HepG2 (cell line): ENCODE measurements at regions of chr1 and their contacts with region 1.

Region 1: DNA sequence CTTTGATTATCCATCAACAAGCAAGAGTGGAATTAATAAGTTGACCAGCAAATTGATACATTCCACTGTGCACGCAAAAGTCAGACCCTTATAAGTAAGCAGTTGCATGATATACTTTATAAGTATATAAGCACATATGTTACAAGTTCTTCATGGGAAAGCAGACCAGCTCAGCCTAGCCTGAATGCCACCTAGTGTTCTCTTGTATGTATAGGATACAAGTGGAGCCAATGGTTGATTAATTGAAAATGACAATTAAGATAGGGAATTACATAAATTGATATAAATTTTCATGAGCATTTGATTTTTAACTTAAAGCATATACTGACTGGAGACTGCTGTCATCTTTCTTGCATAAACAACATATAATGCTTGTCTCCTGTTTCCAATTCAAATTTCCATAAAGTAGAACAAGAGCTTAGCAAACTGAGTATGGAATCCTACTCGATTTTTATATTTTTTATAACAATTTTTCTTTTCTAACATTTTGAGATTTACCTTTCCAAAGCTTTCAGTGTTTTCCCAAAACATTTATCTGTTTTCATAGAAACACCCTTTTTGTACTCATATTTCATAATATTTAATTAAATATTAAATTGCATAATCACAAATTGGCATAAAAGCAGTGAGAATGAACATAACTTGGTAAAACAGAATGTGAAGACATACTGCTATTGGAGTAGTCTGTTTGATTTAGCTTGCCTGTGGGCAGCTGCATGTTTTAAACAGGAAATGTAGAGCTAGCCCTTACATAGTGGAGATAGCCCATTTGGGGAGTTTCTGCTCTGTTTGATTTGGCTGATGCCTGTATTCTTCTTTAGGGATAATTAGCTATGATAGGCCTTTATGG is 62.8 kb downstream of the MAGI3 start:
- DNase-seq: peak; percentile 32
- ATAC-seq: peak; percentile 64; the same call in 2 of the 3 replicates
- H3K4me3 ChIP-seq: no peak overlapping the region
- H3K27ac ChIP-seq: no peak overlapping the region
- H3K4me1 ChIP-seq: peaks cover 28% of the 10 kb centered on the region
- H3K27me3 ChIP-seq: no peaks in the 10 kb centered on the region
- CTCF ChIP-seq: peak; percentile 57
- EP300 ChIP-seq: no peak
- POLR2A ChIP-seq: no peak
- RAD21 ChIP-seq: 0 out of 2 replicates have a peak, but pooled peaks have one; percentile 34

Region 2: GRCh38 chr1:113140588-113141446 is 312.3 kb before region 1 on chr1:
- CTCF ChIA-PET with region 1: interaction called, 11 read pairs
- POLR2A ChIA-PET with region 1: no interaction called
- in situ Hi-C with region 1: no loop called
- intact Hi-C with region 1: loop called (anchors 1 kb)
- DNase-seq: peak; percentile 68
- ATAC-seq: peak; percentile 94
- H3K4me3 ChIP-seq: peak overlapping the region; percentile 55 to 78 (median 56)
- H3K27ac ChIP-seq: peak overlapping the region; percentile 16
- H3K4me1 ChIP-seq: peaks cover 19% of the 10 kb centered on the region
- H3K27me3 ChIP-seq: no peaks in the 10 kb centered on the region
- CTCF ChIP-seq: peak; percentile 93
- EP300 ChIP-seq: no peak
- POLR2A ChIP-seq: no peak
- RAD21 ChIP-seq: peak; percentile 91

Region 3: DNA sequence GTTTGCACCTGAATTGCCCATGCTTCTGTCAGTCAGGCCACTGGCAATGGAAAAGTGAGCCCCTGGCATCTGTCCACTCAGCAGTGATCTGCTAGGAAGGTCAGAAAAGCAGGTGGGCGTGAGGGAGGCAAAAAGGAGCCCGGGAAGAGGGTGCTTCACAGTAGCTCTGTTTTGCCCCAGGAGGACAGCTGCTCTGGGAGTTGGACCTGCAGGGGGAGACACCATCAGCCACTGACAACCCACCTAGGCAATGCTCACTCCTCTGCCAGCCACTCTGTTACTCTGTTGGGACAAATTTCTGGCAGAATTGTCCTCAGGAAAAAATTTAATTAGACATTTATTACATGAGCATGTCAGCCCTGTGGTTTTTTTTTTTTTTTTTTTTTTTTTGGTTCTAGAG is 233.8 kb before region 1 on chr1:
- CTCF ChIA-PET with region 1: no interaction called
- POLR2A ChIA-PET with region 1: no interaction called
- in situ Hi-C with region 1: no loop called
- intact Hi-C with region 1: loop called (anchors 10 kb)
- DNase-seq: no peak
- ATAC-seq: peak; percentile 65
- H3K4me3 ChIP-seq: no peak overlapping the region
- H3K27ac ChIP-seq: no peak overlapping the region
- H3K4me1 ChIP-seq: peaks cover 33% of the 10 kb centered on the region
- H3K27me3 ChIP-seq: no peaks in the 10 kb centered on the region
- CTCF ChIP-seq: peak; percentile 47; the same call in 1 of the 2 replicates
- EP300 ChIP-seq: no peak
- POLR2A ChIP-seq: no peak
- RAD21 ChIP-seq: no peak

Region 4: GRCh38 chr1:113291777-113292602 is 161.2 kb before region 1 on chr1:
- CTCF ChIA-PET with region 1: no interaction called
- POLR2A ChIA-PET with region 1: no interaction called
- in situ Hi-C with region 1: no loop called
- intact Hi-C with region 1: no loop called
- DNase-seq: peak; percentile 7
- ATAC-seq: no peak; the same call in 2 of the 3 replicates
- H3K4me3 ChIP-seq: no peak overlapping the region
- H3K27ac ChIP-seq: no peak overlapping the region
- H3K4me1 ChIP-seq: peaks cover 16% of the 10 kb centered on the region
- H3K27me3 ChIP-seq: 0 out of 5 replicates have a peak, but pooled peaks cover 0 to 3% of the 10 kb centered on the region in 2 experiments
- CTCF ChIP-seq: no peak
- EP300 ChIP-seq: no peak
- POLR2A ChIP-seq: no peak
- RAD21 ChIP-seq: no peak

Region 5: GRCh38 chr1:113396585-113396984 is 56.6 kb before region 1 on chr1:
- CTCF ChIA-PET with region 1: no interaction called
- POLR2A ChIA-PET with region 1: no interaction called
- in situ Hi-C with region 1: no loop called
- intact Hi-C with region 1: loop called (anchors 1 kb)
- DNase-seq: no peak
- ATAC-seq: no peak
- H3K4me3 ChIP-seq: no peak overlapping the region
- H3K27ac ChIP-seq: no peak overlapping the region
- H3K4me1 ChIP-seq: peaks cover 48% of the 10 kb centered on the region
- H3K27me3 ChIP-seq: no peaks in the 10 kb centered on the region; a peak in 1 of 5 replicates
- CTCF ChIP-seq: no peak
- EP300 ChIP-seq: no peak
- POLR2A ChIP-seq: no peak
- RAD21 ChIP-seq: no peak

Region 6: GRCh38 chr1:113438505-113439276 is 14.5 kb before region 1 on chr1:
- CTCF ChIA-PET with region 1: no interaction called
- POLR2A ChIA-PET with region 1: no interaction called
- in situ Hi-C with region 1: no loop called
- intact Hi-C with region 1: loop called (anchors 1 kb)
- DNase-seq: peak; percentile 53
- ATAC-seq: peak; percentile 89
- H3K4me3 ChIP-seq: peak overlapping the region in 1 of 3 experiments; percentile 29; a peak in 1 of 6 replicates
- H3K27ac ChIP-seq: peak overlapping the region; percentile 15
- H3K4me1 ChIP-seq: peaks cover 39% of the 10 kb centered on the region
- H3K27me3 ChIP-seq: no peaks in the 10 kb centered on the region
- CTCF ChIP-seq: no peak
- EP300 ChIP-seq: no peak
- POLR2A ChIP-seq: no peak
- RAD21 ChIP-seq: no peak

Region 7: DNA sequence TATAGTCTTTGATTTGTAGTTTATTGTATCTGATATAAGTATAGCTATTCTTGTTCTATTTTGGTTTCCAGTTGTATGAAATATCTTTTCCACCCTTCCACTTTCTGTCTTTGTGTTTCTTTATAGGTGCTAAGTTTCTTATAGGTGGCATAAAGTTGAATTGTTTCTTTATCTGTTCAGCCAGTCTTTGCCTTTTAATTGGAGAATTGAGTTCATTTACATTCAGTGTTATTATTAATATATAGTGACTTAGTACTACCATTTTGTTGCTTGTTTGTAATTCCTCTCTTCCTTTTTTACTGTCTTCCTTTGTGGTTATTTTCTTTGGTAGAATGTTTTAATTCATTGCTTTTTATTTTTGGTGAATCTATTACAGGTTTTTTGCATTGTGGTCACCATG is 14.8 kb after region 1 on chr1:
- CTCF ChIA-PET with region 1: no interaction called
- POLR2A ChIA-PET with region 1: no interaction called
- in situ Hi-C with region 1: no loop called
- intact Hi-C with region 1: no loop called
- DNase-seq: no peak
- ATAC-seq: no peak
- H3K4me3 ChIP-seq: no peak overlapping the region
- H3K27ac ChIP-seq: no peak overlapping the region
- H3K4me1 ChIP-seq: no peaks in the 10 kb centered on the region
- H3K27me3 ChIP-seq: no peaks in the 10 kb centered on the region
- CTCF ChIP-seq: no peak
- EP300 ChIP-seq: no peak
- POLR2A ChIP-seq: no peak
- RAD21 ChIP-seq: no peak

Region 8: DNA sequence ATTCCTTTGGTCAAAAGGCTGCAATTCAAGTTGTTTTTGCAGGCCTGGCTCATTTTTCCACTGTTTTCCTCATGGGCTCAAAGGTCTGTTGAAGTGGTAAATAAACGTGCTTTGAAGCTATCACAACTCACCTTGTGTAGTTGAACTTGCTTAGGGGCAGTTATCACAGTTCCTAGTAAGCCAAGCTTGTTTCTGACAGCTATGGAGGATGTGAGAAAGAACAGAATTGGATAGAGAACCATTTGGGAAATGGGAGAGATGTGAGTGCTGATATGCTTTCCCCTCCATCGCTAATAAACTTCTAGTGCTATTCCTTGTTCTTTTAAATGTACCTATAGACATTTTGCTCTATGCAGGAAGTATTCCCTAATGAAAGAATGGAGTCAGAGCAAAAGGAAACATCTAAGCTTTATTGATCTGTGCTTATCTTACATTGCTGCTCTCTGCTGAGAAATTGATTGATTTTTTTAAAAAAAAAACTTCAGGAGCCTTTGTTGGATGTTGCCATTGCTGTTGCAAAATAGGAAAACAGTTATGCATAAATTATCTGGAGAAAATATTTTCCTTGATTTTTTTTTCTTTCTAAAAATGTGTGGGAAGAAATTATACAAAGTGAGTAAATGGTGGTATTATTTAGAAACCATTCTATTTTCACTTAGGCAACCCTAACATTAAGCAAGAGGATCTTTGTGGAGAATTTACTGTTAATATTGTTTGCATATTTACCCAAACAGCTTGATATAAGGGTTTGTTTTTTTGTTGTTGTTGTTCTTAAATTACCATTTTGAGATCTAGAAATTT is 55.4 kb after region 1 on chr1:
- CTCF ChIA-PET with region 1: no interaction called
- POLR2A ChIA-PET with region 1: no interaction called
- in situ Hi-C with region 1: no loop called
- intact Hi-C with region 1: loop called (anchors 10 kb)
- DNase-seq: peak; percentile 94
- ATAC-seq: peak; percentile 99
- H3K4me3 ChIP-seq: peak overlapping the region in 2 of 3 experiments; percentile 42 to 51; a peak in 3 of 6 replicates
- H3K27ac ChIP-seq: peak overlapping the region; percentile 81
- H3K4me1 ChIP-seq: peaks cover 36% of the 10 kb centered on the region
- H3K27me3 ChIP-seq: no peaks in the 10 kb centered on the region
- CTCF ChIP-seq: no peak
- EP300 ChIP-seq: peak in 1 of 2 experiments; percentile 83; a peak in 2 of 4 replicates
- POLR2A ChIP-seq: no peak
- RAD21 ChIP-seq: no peak

Region 9: GRCh38 chr1:113677250-113678158 is 224.4 kb after region 1 on chr1:
- CTCF ChIA-PET with region 1: no interaction called
- POLR2A ChIA-PET with region 1: no interaction called
- in situ Hi-C with region 1: no loop called
- intact Hi-C with region 1: loop called (anchors 10 kb)
- DNase-seq: peak; percentile 35
- ATAC-seq: no peak; the same call in 2 of the 3 replicates
- H3K4me3 ChIP-seq: no peak overlapping the region
- H3K27ac ChIP-seq: no peak overlapping the region
- H3K4me1 ChIP-seq: no peaks in the 10 kb centered on the region
- H3K27me3 ChIP-seq: no peaks in the 10 kb centered on the region
- CTCF ChIP-seq: peak; percentile 64
- EP300 ChIP-seq: no peak
- POLR2A ChIP-seq: no peak
- RAD21 ChIP-seq: no peak